GM10248 (cell line): ENCODE measurements at regions of chr9 and their contacts with region 1.

Region 1: GRCh38 chr9:128818099-128818838 is at the start of gene ENDOG:
- DNase-seq: peak; percentile 99
- CTCF ChIP-seq: peak; percentile 90

Region 2: GRCh38 chr9:127684576-127684975 is 1133.7 kb before region 1 on chr9:
- CTCF ChIA-PET with region 1: no interaction called
- POLR2A ChIA-PET with region 1: no interaction called
- DNase-seq: no peak
- CTCF ChIP-seq: no peak

Region 3: DNA sequence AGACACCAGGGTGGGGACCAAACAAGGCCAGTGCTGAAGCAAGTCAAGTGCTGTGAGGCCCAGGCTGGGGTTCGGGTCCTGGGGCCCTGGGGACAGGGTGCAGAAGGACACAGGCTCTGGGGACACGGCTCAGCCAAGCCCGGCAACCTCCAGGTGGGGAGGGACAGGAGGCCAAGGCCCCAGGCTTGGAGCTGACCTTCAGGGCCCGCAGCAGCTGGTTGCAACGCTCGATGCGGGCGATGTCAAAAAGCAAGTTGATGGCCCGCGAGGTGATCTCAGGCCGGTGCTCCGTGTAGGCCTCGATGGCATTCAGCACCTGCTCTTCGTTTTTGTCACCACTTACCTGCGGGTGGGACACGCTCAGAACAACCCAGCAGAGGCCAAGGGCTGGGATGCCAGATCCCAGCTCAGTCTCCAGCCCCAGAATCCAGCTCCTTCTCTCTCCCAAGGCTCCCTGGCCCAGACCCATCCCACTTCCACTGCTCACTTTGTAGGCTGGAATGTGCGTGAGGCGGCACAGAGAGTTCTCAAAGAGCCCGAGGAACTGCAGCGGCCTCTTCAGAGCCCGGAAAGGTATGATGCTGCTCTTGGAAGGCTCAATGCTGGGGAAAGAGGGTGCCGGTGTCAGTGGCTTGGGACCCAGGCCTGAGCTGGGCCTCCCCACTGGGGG is 67.2 kb before region 1 on chr9:
- CTCF ChIA-PET with region 1: interaction called, 10 read pairs
- POLR2A ChIA-PET with region 1: no interaction called
- DNase-seq: no peak
- CTCF ChIP-seq: no peak

Region 4: GRCh38 chr9:128786681-128787601 is 31.3 kb before region 1 on chr9 and contains the start of gene TBC1D13:
- CTCF ChIA-PET with region 1: interaction called, 16 read pairs
- POLR2A ChIA-PET with region 1: no interaction called
- DNase-seq: peak; percentile 94
- CTCF ChIP-seq: no peak

Region 5: GRCh38 chr9:128802482-128802881 is 15.8 kb before region 1 on chr9:
- CTCF ChIA-PET with region 1: interaction called, 11 read pairs
- POLR2A ChIA-PET with region 1: interaction called, 7 read pairs
- DNase-seq: no peak
- CTCF ChIP-seq: no peak

Region 6: GRCh38 chr9:128829477-128830251 is 11.4 kb after region 1 on chr9 and contains the start of gene SPOUT1:
- CTCF ChIA-PET with region 1: interaction called, 30 read pairs
- POLR2A ChIA-PET with region 1: interaction called, 14 read pairs
- DNase-seq: peak; percentile 100
- CTCF ChIP-seq: no peak

Region 7: GRCh38 chr9:128838338-128838737 is 20.1 kb after region 1 on chr9:
- CTCF ChIA-PET with region 1: interaction called, 12 read pairs
- POLR2A ChIA-PET with region 1: interaction called, 3 read pairs
- DNase-seq: no peak
- CTCF ChIP-seq: no peak

Region 8: DNA sequence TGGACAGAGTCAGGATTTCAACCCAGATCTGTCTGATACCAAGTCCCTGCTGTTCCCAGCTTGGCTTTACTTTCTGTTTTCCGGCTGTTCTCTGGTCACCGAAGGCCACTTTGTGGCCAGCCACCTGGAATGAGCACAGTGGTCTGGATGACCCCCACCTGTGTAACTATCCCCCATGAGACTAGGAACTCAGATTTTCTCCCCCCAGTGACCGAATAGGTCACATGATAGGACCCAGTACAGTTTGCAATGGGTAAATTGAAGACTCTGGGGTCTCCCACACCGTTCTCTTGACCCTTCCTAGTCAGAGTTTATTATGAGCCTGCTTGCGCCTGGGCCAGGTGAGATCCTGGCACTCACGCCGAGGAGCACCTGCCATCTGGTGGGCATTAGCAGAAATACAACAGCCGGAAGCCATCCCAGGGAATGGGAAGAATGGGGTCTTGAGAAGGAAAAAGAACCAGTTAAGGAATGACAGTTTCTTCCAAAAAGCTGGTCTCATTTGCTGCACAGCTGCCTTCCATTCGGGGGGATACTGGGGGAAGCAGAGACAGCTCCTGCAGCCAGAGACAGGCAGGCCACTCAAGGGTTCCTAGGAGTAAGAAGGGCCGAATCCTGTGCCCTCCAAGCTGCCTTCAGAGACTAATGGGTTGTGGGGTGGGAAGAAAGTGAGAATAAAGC is 109.6 kb after region 1 on chr9:
- CTCF ChIA-PET with region 1: interaction called, 13 read pairs
- POLR2A ChIA-PET with region 1: no interaction called
- DNase-seq: peak; percentile 79
- CTCF ChIP-seq: peak; percentile 93